Activated CD4-positive, alpha-beta T cell treated with anti-CD3 and anti-CD28 coated beads for 36 hours (primary cell): ENCODE measurements at regions of chr15 and their contacts with region 1.

Region 1: GRCh38 chr15:76931397-76932007 is at the start of gene RCN2:
- DNase-seq: peak; percentile 96
- ATAC-seq: peak; percentile 99
- H3K4me3 Mint-ChIP-seq: peak within 1 kb of the TSS; percentile 81
- H3K27ac Mint-ChIP-seq: peak within 1 kb of the TSS; percentile 85
- H3K4me1 Mint-ChIP-seq: peaks cover 31% of the 10 kb centered on the region
- H3K27me3 Mint-ChIP-seq: no peaks in the 10 kb centered on the region
- total RNA-seq, gene RCN2: 16.6 to 18.9 TPM

Region 2: GRCh38 chr15:77070495-77071304 is 139.2 kb after region 1 on chr15 and contains the start of gene TSPAN3:
- CTCF ChIA-PET with region 1: interaction called, 4 read pairs
- POLR2A ChIA-PET with region 1: no interaction called
- intact Hi-C with region 1: loop called in 1 of 2 experiments (anchors 1 kb)
- DNase-seq: peak; percentile 95
- ATAC-seq: peak; percentile 99
- H3K4me3 Mint-ChIP-seq: peak within 1 kb of the TSS; percentile 75
- H3K27ac Mint-ChIP-seq: peak within 1 kb of the TSS; percentile 65
- H3K4me1 Mint-ChIP-seq: peaks cover 29% of the 10 kb centered on the region
- H3K27me3 Mint-ChIP-seq: no peaks in the 10 kb centered on the region
- total RNA-seq, gene TSPAN3: 26.2 to 28.4 TPM